K562 (cell line): ENCODE measurements at regions of chr1 and their contacts with region 1.

Region 1: DNA sequence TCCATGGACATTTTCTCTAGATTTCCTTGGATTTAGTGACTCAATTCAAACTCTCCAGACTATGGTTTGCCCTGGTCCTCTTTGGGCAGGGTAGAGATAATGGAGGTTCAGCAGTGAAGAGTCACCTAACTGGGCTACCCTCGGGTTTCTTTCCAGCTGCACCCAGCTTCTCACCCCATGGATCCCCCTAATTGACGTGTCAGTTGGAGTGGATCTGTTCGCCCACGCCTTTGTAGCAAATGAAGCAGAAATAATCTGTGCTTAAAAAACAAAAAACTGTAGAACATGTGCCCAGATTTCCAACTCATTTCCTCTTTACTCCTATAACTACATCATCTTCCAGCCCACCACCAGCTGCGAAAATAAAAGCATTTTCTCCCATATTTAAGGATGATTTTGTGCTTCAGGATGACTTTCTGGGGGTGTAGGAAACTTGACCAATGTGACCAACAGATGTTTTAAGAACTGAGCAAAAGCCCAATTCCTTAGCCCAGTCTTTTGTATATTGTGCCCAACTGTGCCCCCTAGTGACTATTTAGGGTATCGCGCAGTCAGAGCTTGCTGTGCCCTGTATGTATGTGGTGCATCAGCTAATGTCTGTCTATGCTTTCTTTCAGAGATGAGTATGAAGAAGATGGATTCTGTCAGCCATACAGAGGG is 66.5 kb upstream of the UBE2U start:
- DNase-seq: peak; percentile 50 to 69 (median 64)
- ATAC-seq: peak; percentile 92
- H3K4me3 ChIP-seq: no peak overlapping the region
- H3K27ac ChIP-seq: no peak overlapping the region
- H3K4me1 ChIP-seq: no peaks in the 10 kb centered on the region
- H3K27me3 ChIP-seq: peaks cover 0 to 4% of the 10 kb centered on the region in 2 experiments; a peak in 2 of 5 replicates
- CTCF ChIP-seq: peak; percentile 58 to 78 (median 76); a peak in 5 of 6 replicates
- EP300 ChIP-seq: no peak
- POLR2A ChIP-seq: no peak
- RAD21 ChIP-seq: peak; percentile 69 to 76

Region 2: DNA sequence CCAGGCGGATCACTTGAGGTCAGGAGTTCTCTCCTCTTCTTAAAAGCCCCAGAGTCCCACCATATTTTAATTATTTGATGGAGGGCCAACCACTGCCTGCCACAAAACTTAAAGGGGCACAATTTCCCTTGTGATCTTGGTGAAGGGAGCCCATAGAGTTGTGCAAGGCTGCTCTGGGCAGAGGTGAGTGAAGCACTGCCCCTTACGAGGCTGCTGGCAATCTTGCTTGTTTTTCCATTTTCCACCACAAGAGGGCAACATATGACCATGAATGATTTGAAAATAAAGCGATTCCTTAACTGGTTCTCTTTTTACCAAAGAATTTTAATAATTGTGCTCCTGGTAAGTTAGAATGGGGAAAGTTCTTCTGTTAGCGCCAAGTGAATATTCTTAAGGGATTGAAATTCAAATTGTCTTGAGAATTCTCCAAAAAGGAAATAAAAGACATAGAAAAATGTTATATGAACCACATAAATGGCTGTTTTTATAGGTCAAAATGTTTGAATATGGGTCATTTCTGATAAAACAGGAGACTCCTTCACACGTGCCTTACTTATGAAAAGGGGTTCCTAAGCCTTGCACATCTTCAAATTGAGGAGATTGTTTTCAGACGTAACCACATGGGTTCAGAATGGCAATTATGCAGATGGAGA is 521.0 kb before region 1 on chr1:
- CTCF ChIA-PET with region 1: no interaction called
- POLR2A ChIA-PET with region 1: no interaction called
- in situ Hi-C with region 1: no loop called
- intact Hi-C with region 1: loop called (anchors 1 kb)
- DNase-seq: peak; percentile 61 to 73 (median 70)
- ATAC-seq: peak; percentile 80
- H3K4me3 ChIP-seq: no peak overlapping the region
- H3K27ac ChIP-seq: no peak overlapping the region
- H3K4me1 ChIP-seq: no peaks in the 10 kb centered on the region
- H3K27me3 ChIP-seq: peaks cover 2 to 10% of the 10 kb centered on the region in 2 experiments; a peak in 2 of 5 replicates
- CTCF ChIP-seq: peak; percentile 54 to 80 (median 61); a peak in 5 of 6 replicates
- EP300 ChIP-seq: no peak
- POLR2A ChIP-seq: no peak
- RAD21 ChIP-seq: peak; percentile 70 to 79

Region 3: GRCh38 chr1:63674238-63674864 is 462.5 kb before region 1 on chr1:
- CTCF ChIA-PET with region 1: no interaction called
- POLR2A ChIA-PET with region 1: interaction called, 3 read pairs
- in situ Hi-C with region 1: no loop called
- intact Hi-C with region 1: loop called (anchors 1 kb)
- DNase-seq: peak; percentile 41 to 59 (median 50)
- ATAC-seq: peak; percentile 96
- H3K4me3 ChIP-seq: no peak overlapping the region
- H3K27ac ChIP-seq: no peak overlapping the region
- H3K4me1 ChIP-seq: no peaks in the 10 kb centered on the region
- H3K27me3 ChIP-seq: peaks cover 2 to 23% of the 10 kb centered on the region in 2 experiments; a peak in 2 of 5 replicates
- CTCF ChIP-seq: peak; percentile 59 to 68 (median 62)
- EP300 ChIP-seq: no peak
- POLR2A ChIP-seq: no peak
- RAD21 ChIP-seq: peak; percentile 34 to 65; a peak in 3 of 4 replicates

Region 4: GRCh38 chr1:63691701-63692425 is 445.0 kb before region 1 on chr1:
- CTCF ChIA-PET with region 1: interaction called, 5 read pairs
- POLR2A ChIA-PET with region 1: no interaction called
- in situ Hi-C with region 1: no loop called
- intact Hi-C with region 1: loop called (anchors 1 kb)
- DNase-seq: peak; percentile 47 to 61 (median 54)
- ATAC-seq: peak; percentile 98
- H3K4me3 ChIP-seq: no peak overlapping the region
- H3K27ac ChIP-seq: no peak overlapping the region
- H3K4me1 ChIP-seq: no peaks in the 10 kb centered on the region
- H3K27me3 ChIP-seq: no peaks in the 10 kb centered on the region
- CTCF ChIP-seq: peak; percentile 62 to 83 (median 71); a peak in 5 of 6 replicates
- EP300 ChIP-seq: peak; percentile 65
- POLR2A ChIP-seq: no peak
- RAD21 ChIP-seq: peak; percentile 56 to 78

Region 5: GRCh38 chr1:63917571-63918417 is 219.1 kb before region 1 on chr1:
- CTCF ChIA-PET with region 1: no interaction called
- POLR2A ChIA-PET with region 1: no interaction called
- in situ Hi-C with region 1: no loop called
- intact Hi-C with region 1: loop called (anchors 10 kb)
- DNase-seq: peak; percentile 21 to 55 (median 42)
- ATAC-seq: peak; percentile 84
- H3K4me3 ChIP-seq: no peak overlapping the region
- H3K27ac ChIP-seq: no peak overlapping the region
- H3K4me1 ChIP-seq: no peaks in the 10 kb centered on the region
- H3K27me3 ChIP-seq: 0 out of 5 replicates have a peak, but pooled peaks cover 0 to 5% of the 10 kb centered on the region in 2 experiments
- CTCF ChIP-seq: peak; percentile 38 to 61 (median 51); a peak in 4 of 6 replicates
- EP300 ChIP-seq: no peak
- POLR2A ChIP-seq: no peak
- RAD21 ChIP-seq: no peak

Region 6: DNA sequence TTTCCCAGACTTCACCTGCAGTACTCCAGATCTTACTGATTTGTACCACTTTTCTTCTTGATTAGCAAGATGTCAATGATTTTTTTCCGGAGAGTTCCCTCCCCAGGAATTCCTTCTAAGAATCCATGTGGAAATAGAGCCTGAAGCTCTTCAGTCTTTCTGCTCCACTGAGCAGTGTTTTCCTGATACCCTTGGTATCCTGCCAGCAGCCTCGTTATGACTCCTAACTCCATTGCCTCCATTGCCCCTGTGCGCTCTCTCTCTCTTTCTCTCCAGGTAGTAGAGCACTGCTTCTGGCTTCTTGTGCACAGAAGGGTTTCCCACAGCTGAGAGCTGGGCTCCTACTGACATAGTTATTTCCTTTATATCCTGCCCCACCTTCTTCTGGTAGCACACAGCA is 78.7 kb after region 1 on chr1:
- CTCF ChIA-PET with region 1: no interaction called
- POLR2A ChIA-PET with region 1: no interaction called
- in situ Hi-C with region 1: no loop called
- intact Hi-C with region 1: no loop called
- DNase-seq: no peak
- ATAC-seq: no peak
- H3K4me3 ChIP-seq: no peak overlapping the region
- H3K27ac ChIP-seq: no peak overlapping the region
- H3K4me1 ChIP-seq: no peaks in the 10 kb centered on the region
- H3K27me3 ChIP-seq: no peaks in the 10 kb centered on the region; a peak in 1 of 5 replicates
- CTCF ChIP-seq: no peak
- EP300 ChIP-seq: no peak
- POLR2A ChIP-seq: no peak
- RAD21 ChIP-seq: no peak

Region 7: DNA sequence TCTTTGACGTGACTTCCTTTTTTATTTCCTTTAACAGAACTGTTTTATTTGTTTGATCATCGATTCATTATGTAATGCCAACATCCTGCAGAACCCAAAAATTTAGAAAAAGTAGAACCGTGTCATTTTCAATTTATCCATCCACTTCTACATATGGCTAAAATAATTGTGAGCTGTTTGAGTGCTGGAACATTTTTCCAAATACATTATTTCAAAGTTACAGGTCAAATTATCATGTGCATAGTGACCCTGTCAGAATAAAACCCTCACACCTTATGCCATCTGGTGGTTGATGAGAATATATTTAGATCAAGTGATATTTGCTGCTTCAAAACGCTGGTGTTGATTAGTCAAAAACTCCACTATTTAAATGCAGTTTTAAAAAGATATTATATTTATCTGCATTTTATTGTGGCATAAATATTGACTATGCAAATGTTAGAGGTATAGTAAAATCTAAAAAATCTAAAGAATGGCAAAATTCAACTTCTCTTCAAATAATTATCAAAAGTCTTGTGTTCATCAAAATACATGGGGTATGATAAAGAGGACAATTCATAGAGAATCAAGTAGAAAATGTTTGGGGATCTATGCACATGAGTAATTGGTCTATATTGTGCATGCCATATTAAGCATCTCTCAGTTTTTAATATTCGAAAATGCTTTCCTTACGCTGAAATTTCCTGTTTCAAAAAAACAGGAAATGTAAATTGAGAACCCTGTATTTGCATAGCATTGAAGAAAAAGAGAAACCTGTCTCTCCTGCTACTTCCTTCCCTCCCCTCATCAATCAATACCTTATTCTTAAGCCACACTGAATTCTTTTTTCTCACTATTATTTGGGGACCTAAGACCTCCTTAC is 106.2 kb after region 1 on chr1:
- CTCF ChIA-PET with region 1: no interaction called
- POLR2A ChIA-PET with region 1: no interaction called
- in situ Hi-C with region 1: no loop called
- intact Hi-C with region 1: loop called (anchors 10 kb)
- DNase-seq: peak in 3 of 4 experiments; percentile 7 to 19 (median 10)
- ATAC-seq: 0 out of 3 replicates have a peak, but pooled peaks have one; percentile 36
- H3K4me3 ChIP-seq: no peak overlapping the region
- H3K27ac ChIP-seq: no peak overlapping the region
- H3K4me1 ChIP-seq: no peaks in the 10 kb centered on the region
- H3K27me3 ChIP-seq: no peaks in the 10 kb centered on the region; a peak in 1 of 5 replicates
- CTCF ChIP-seq: peak in 2 of 3 experiments; percentile 15 to 43; a peak in 3 of 6 replicates
- EP300 ChIP-seq: no peak
- POLR2A ChIP-seq: no peak
- RAD21 ChIP-seq: peak; percentile 35 to 57; a peak in 3 of 4 replicates